ENCODE measurements at regions of chr7 and their contacts with region 1.

Region 1: GRCh38 chr7:106041140-106041717 is 70.9 kb downstream of the SYPL1 start:
- DNase-seq: peak; percentile 62
- ATAC-seq: peak; percentile 61
- H3K4me3 ChIP-seq: no peak overlapping the region
- H3K4me3 Mint-ChIP-seq: no peak overlapping the region
- H3K27ac ChIP-seq: no peak overlapping the region
- H3K27ac Mint-ChIP-seq: peak overlapping the region; percentile 5
- H3K4me1 ChIP-seq: peaks cover 14 to 23% of the 10 kb centered on the region in 2 donors
- H3K4me1 Mint-ChIP-seq: peaks cover 13% of the 10 kb centered on the region
- H3K27me3 ChIP-seq: peaks cover 0 to 9% (median 2%) of the 10 kb centered on the region in 4 experiments
- H3K27me3 Mint-ChIP-seq: no peaks in the 10 kb centered on the region
- CTCF ChIP-seq: peak; percentile 90

Region 2: DNA sequence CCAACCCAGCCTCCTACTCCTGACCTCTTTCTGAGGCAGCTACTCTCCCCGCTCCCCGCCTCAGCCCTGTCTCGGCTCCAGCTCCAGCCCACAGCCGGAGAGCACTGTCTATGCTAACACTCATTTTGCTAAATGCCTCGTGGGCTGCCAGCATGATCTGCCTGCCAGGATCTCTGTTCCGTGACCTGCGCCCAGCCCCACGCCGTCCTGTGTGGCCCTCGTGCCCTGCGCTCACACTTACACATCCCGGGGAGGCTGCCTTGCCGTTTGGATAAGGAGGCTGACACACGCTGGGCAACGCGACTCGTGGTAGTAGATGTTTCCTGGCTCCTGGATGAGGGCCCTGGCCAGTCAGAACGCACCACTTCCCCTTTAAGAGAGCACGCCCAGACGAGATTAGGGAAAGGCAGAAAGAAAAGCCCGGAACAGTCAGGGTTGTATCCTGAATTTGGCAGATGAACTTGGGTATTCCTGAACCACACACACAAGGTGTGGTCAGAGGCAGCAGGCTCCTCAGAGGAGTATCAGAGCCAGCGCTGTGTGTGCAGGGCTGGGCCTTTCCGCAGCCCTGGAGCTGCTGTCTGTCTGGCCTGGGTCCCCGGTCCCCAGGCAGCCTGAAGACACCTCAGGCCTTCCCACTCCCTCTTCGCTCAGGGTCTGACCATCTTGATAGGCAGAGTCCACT is 362.3 kb before region 1 on chr7:
- CTCF ChIA-PET with region 1: interaction called, 11 read pairs
- POLR2A ChIA-PET with region 1: no interaction called
- intact Hi-C with region 1: loop called (anchors 10 kb)
- DNase-seq: peak; percentile 70
- ATAC-seq: peak; percentile 44
- H3K4me3 ChIP-seq: peak overlapping the region; percentile 48 to 82 (median 65)
- H3K4me3 Mint-ChIP-seq: peak overlapping the region; percentile 96
- H3K27ac ChIP-seq: peak overlapping the region; percentile 56 to 70
- H3K27ac Mint-ChIP-seq: peak overlapping the region; percentile 94
- H3K4me1 ChIP-seq: peaks cover 37 to 45% of the 10 kb centered on the region in 2 donors
- H3K4me1 Mint-ChIP-seq: peaks cover 57% of the 10 kb centered on the region
- H3K27me3 ChIP-seq: no peaks in the 10 kb centered on the region
- H3K27me3 Mint-ChIP-seq: no peaks in the 10 kb centered on the region
- CTCF ChIP-seq: no peak

Region 3: DNA sequence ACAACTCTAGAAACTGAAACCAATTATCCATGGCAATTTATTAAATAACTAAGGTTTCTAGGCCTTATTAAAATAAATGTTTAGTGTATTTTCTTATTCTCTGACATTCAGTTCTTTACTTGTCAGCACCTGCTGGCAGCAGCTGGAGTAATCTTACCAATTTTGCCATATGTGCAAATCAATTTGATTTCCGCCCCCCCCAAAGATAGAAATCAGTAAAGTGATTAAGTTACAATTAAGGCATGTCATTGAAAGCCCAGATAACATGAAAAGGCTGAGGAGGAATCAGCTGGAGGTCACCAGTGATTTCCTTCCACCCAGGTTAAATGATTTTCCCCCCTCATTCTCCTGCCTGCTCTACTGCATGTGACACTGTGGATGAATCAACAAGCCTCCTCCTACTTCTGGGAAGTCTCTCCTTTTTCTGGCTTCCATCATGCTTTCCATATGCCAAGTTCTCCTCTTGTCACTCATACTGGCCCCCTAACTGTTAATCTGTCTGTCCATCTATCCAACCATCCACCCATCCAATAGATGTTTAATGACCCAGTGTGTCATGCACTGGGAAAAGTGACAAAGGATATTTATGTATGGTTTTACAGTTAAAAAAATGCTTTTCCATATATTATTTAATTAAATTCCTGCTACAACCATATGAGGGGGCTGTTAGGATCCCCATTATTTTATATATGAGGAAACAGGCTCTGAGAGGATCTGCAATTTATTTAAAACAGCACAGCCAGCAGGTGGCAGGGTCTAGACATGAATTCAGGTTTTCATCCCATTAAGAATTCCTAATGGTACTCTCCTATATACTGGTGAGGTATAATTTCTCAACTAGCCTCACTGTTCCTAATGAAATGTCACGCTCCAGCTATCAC is 281.3 kb before region 1 on chr7:
- CTCF ChIA-PET with region 1: interaction called, 167 read pairs
- POLR2A ChIA-PET with region 1: interaction called, 3 read pairs
- intact Hi-C with region 1: loop called (anchors 1 kb)
- DNase-seq: peak; percentile 44
- ATAC-seq: no peak
- H3K4me3 ChIP-seq: no peak overlapping the region
- H3K4me3 Mint-ChIP-seq: no peak overlapping the region
- H3K27ac ChIP-seq: no peak overlapping the region
- H3K27ac Mint-ChIP-seq: no peak overlapping the region
- H3K4me1 ChIP-seq: no peaks in the 10 kb centered on the region
- H3K4me1 Mint-ChIP-seq: no peaks in the 10 kb centered on the region
- H3K27me3 ChIP-seq: no peaks in the 10 kb centered on the region
- H3K27me3 Mint-ChIP-seq: no peaks in the 10 kb centered on the region
- CTCF ChIP-seq: peak; percentile 55

Region 4: GRCh38 chr7:105934572-105935185 is 106.5 kb before region 1 on chr7:
- CTCF ChIA-PET with region 1: interaction called, 4 read pairs
- POLR2A ChIA-PET with region 1: no interaction called
- intact Hi-C with region 1: loop called (anchors 2 kb)
- DNase-seq: peak; percentile 22
- ATAC-seq: no peak
- H3K4me3 ChIP-seq: no peak overlapping the region
- H3K4me3 Mint-ChIP-seq: no peak overlapping the region
- H3K27ac ChIP-seq: no peak overlapping the region
- H3K27ac Mint-ChIP-seq: no peak overlapping the region
- H3K4me1 ChIP-seq: no peaks in the 10 kb centered on the region
- H3K4me1 Mint-ChIP-seq: no peaks in the 10 kb centered on the region
- H3K27me3 ChIP-seq: no peaks in the 10 kb centered on the region
- H3K27me3 Mint-ChIP-seq: no peaks in the 10 kb centered on the region
- CTCF ChIP-seq: no peak

Region 5: DNA sequence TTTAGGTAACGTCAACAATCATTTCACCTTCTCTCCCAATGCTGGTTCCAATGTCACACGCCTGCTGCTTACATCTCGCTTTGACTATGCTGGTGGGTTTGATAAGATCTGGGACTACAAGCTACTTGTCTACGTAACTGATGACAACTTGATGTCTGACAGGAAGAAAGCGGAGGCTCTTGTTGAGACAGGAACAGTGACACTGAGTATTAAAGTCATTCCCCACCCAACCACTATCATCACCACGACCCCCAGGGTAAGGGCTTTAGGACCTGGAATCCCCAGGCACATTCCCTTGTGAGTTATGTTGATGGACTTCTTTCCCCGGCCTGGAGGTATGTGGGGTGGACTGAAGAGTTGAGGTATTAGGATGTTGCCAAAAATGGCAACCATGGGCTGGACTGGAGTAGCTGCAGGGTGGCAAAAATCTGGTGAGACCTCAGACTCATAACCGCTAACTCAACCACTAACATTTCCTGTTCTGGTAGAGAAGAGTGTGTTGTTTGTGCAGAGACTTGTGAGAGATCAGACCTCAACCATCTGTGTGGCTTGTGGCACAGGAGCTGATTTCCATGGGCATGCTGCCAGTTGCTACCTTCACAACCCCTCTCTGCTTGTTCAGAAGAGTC is 18.9 kb before region 1 on chr7:
- CTCF ChIA-PET with region 1: interaction called, 46 read pairs
- POLR2A ChIA-PET with region 1: no interaction called
- intact Hi-C with region 1: no loop called
- DNase-seq: peak; percentile 50
- ATAC-seq: peak; percentile 39
- H3K4me3 ChIP-seq: peak overlapping the region in 1 of 5 experiments; percentile 45
- H3K4me3 Mint-ChIP-seq: peak overlapping the region; percentile 75
- H3K27ac ChIP-seq: peak overlapping the region; percentile 30 to 45
- H3K27ac Mint-ChIP-seq: peak overlapping the region; percentile 34
- H3K4me1 ChIP-seq: peaks cover 62% of the 10 kb centered on the region in 2 donors
- H3K4me1 Mint-ChIP-seq: peaks cover 61% of the 10 kb centered on the region
- H3K27me3 ChIP-seq: peaks cover 0 to 5% (median 0%) of the 10 kb centered on the region in 4 experiments
- H3K27me3 Mint-ChIP-seq: no peaks in the 10 kb centered on the region
- CTCF ChIP-seq: no peak

Region 6: GRCh38 chr7:106239404-106239803 is 198.2 kb after region 1 on chr7:
- CTCF ChIA-PET with region 1: no interaction called
- POLR2A ChIA-PET with region 1: no interaction called
- intact Hi-C with region 1: no loop called
- DNase-seq: no peak
- ATAC-seq: no peak
- H3K4me3 ChIP-seq: no peak overlapping the region
- H3K4me3 Mint-ChIP-seq: no peak overlapping the region
- H3K27ac ChIP-seq: no peak overlapping the region
- H3K27ac Mint-ChIP-seq: no peak overlapping the region
- H3K4me1 ChIP-seq: no peaks in the 10 kb centered on the region
- H3K4me1 Mint-ChIP-seq: no peaks in the 10 kb centered on the region
- H3K27me3 ChIP-seq: no peaks in the 10 kb centered on the region
- H3K27me3 Mint-ChIP-seq: peaks cover 6% of the 10 kb centered on the region
- CTCF ChIP-seq: no peak